MCF 10A (cell line): ENCODE measurements at regions of chr11 and their contacts with region 1.

Region 1: DNA sequence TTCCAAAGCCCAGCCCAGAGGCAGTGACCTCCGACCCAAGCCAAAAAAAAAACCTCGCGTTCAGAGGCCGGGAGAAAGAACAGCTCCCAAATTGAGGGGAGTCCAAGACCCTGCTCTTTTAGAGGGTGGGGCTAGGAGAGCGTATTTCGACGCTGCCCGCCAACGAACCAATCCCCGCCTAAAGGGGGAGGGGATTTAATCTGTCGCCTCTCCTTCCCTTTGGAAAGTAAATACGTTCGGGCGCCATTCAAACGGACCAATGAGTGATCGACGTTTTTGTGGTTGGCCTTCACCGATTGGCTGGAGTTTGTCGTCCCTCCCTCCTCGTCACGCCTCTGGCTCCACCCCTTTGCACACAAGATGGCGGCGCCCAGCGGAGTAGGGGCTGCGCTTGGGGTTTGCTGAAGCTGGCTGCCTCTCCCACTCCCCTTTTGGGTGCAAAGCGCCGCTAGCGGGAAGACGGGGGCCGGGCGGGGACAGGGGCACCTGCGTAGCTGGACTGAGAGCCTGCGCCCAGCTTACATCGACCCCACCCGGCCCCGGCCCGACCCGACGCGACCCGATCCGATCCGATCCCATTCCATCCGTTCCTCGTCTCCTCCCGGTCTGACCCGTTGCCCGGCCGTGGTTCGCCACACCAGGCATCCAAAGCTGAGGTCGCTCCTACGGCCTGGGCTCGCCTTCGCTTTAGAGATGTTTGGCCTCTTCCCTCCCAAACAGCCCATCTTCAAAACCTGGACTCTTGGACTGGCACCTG is at the start of gene RNF26:
- DNase-seq: peak; percentile 99
- H3K4me3 Mint-ChIP-seq: peak within 1 kb of the TSS; percentile 86
- H3K27ac Mint-ChIP-seq: peak within 1 kb of the TSS; percentile 89
- H3K4me1 Mint-ChIP-seq: peaks cover 30% of the 10 kb centered on the region
- H3K27me3 Mint-ChIP-seq: peaks cover 16% of the 10 kb centered on the region
- CTCF ChIP-seq: no peak
- total RNA-seq, gene RNF26: 19.2 and 20.9 TPM in 2 replicates

Region 2: DNA sequence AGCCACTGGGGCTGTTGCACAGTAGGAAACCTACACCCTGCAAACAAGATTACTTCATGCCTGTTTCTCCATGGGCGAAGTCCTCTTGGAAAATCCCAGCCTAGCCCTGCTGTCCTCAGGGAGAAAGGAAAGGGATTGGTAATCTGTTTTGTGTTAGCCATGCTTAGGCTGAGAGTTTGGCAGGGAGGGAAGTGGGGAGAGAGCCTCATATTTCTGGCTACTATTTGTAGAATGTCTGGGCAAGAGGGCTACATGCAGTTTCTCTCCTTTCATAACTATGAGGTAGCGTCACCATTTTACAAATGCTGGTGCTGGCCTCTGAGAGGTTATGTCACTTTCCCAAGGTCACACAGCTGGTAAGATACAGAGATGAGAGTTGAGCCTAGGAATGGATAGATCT is 12.9 kb after region 1 on chr11:
- CTCF ChIA-PET with region 1: interaction called, 15 read pairs
- POLR2A ChIA-PET with region 1: interaction called, 4 read pairs
- intact Hi-C with region 1: no loop called
- DNase-seq: no peak
- H3K4me3 Mint-ChIP-seq: no peak overlapping the region
- H3K27ac Mint-ChIP-seq: no peak overlapping the region
- H3K4me1 Mint-ChIP-seq: no peaks in the 10 kb centered on the region
- H3K27me3 Mint-ChIP-seq: peaks cover 23% of the 10 kb centered on the region
- CTCF ChIP-seq: no peak

Region 3: GRCh38 chr11:119356349-119357031 is 22.1 kb after region 1 on chr11:
- CTCF ChIA-PET with region 1: interaction called, 20 read pairs
- POLR2A ChIA-PET with region 1: interaction called, 4 read pairs
- intact Hi-C with region 1: no loop called
- DNase-seq: peak; percentile 80
- H3K4me3 Mint-ChIP-seq: peak overlapping the region; percentile 79
- H3K27ac Mint-ChIP-seq: no peak overlapping the region
- H3K4me1 Mint-ChIP-seq: peaks cover 41% of the 10 kb centered on the region
- H3K27me3 Mint-ChIP-seq: no peaks in the 10 kb centered on the region
- CTCF ChIP-seq: peak; percentile 92

Region 4: DNA sequence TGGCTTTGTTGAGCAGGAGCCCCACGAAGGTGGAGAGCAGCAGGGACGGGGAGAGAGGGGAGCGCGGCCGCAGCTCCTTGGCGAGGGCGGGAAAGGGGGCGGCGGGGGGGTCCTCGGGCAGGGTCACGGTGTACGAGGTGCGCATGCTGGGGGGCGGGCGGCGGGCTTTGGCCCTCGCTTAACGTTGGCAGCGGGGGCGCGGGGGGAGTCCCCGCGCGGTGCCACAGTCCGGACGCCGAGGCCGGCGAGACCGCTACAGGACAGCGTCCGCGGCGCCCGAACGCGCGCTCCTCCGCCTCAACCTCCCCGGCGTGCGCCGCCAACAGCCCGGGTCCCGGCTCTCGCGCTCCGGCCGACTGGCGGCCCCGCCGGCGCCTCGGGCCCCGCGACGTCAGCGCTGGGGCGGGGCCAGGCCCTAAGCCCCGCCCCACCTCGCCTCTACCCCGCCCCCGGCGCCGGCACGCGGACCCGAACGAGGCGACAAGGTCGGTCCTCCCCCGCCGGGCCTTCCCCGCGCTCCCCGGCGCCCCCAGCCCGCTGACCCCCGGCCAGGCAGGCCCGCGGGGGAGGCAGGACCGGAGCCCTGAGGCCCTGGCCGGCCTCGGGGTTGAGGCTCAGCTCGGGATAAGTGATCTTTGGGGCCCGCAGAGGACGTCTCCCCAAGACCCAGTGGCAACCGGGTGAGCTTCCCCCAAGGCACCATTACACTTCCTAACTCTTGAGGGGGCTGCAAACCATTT is 29.7 kb after region 1 on chr11:
- CTCF ChIA-PET with region 1: interaction called, 20 read pairs
- POLR2A ChIA-PET with region 1: interaction called, 11 read pairs
- intact Hi-C with region 1: no loop called
- DNase-seq: no peak
- H3K4me3 Mint-ChIP-seq: no peak overlapping the region
- H3K27ac Mint-ChIP-seq: no peak overlapping the region
- H3K4me1 Mint-ChIP-seq: peaks cover 73% of the 10 kb centered on the region
- H3K27me3 Mint-ChIP-seq: no peaks in the 10 kb centered on the region
- CTCF ChIP-seq: no peak

Region 5: GRCh38 chr11:119567688-119568582 is 233.6 kb after region 1 on chr11:
- CTCF ChIA-PET with region 1: no interaction called
- POLR2A ChIA-PET with region 1: no interaction called
- intact Hi-C with region 1: no loop called
- DNase-seq: peak; percentile 67
- H3K4me3 Mint-ChIP-seq: no peak overlapping the region
- H3K27ac Mint-ChIP-seq: no peak overlapping the region
- H3K4me1 Mint-ChIP-seq: peaks cover 7% of the 10 kb centered on the region
- H3K27me3 Mint-ChIP-seq: peaks cover 15% of the 10 kb centered on the region
- CTCF ChIP-seq: no peak